Mucosa of descending colon (tissue), 3 donors: ENCODE measurements at regions of chr15 and their contacts with region 1.

Region 1: DNA sequence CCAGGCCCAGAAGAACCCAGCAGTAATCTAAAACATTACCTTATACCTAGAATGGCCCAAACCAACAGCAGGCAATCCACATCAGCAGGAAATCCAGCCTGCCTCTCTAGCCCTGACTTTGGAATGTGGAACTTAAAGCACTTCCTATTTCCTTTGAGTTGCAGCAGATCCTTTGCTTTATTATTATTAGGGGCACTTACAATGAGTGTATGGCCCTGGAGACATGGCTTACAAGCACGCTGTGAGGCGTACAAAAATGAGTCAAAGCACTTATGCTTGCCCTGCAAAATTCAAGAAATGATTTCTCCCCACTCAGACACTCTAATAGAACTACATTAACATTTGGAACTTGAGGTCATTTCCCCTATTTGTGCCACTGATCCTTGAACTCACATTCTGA is 9.5 kb upstream of the KNSTRN start:
- DNase-seq: no peak
- ATAC-seq: no peak
- H3K4me3 ChIP-seq: no peak overlapping the region
- H3K4me1 ChIP-seq: peaks cover 4% of the 10 kb centered on the region
- CTCF ChIP-seq: no peak

Region 2: DNA sequence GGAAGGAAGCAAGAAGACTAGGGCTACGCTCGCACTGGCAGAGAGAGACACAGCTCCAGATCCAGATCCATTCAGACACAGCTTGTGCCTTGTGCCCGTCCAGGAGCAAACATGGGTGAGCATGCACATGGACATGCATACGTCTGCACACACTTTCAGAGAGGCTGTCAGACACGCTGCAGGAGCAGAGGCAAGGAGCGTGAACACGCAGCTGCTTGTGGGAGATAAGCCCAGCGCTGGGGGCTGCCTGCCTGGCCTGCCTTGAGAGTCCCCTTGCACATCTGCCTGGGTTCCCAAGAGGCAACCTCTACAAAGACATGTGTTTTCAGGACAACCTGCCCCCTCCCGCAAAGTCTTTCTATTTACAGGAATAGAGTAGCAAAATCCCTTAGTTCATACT is 54.2 kb after region 1 on chr15:
- intact Hi-C with region 1: loop called in 1 of 2 experiments (anchors 5 kb)
- DNase-seq: no peak
- ATAC-seq: no peak
- H3K4me3 ChIP-seq: no peak overlapping the region
- H3K4me1 ChIP-seq: no peaks in the 10 kb centered on the region
- CTCF ChIP-seq: no peak